Activated CD8-positive, alpha-beta T cell treated with anti-CD3 and anti-CD28 coated beads for 36 hours (primary cell): ENCODE measurements at regions of chr17 and their contacts with region 1.

Region 1: DNA sequence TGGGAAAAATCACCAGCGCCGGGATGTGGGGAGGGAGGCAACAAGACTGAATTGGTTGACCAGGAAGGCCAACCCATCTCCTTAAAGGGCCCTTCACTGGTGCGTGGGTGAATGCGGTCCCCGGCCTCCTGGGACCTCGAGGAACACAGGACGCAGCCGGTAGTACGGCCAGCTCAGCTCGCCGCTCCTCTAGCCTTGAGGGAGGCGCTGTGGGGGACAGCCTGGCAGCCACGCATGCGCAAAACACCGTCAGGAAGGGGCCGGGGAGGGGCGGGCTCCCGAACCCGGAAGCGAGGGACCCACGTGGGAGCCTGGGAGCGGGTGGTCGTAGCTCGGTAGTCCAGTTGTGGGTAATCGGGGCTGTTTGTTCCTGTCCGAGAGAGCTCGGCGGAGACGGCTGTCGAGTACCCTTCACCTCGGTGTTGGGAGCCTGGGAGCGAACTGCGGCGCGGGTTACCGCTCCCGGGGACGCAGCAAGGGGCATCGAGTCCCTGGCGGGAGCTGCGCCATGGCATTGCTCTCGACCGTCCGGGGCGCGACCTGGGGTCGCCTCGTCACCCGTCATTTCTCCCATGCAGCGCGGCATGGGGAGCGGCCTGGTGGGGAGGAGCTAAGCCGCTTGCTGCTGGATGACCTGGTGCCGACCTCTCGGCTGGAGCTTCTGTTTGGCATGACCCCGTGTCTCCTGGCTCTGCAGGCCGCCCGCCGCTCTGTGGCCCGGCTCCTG is at the start of gene MRM1:
- DNase-seq: peak; percentile 92
- ATAC-seq: peak; percentile 88
- H3K4me3 Mint-ChIP-seq: peak within 1 kb of the TSS; percentile 91
- H3K27ac Mint-ChIP-seq: peak within 1 kb of the TSS; percentile 87
- H3K4me1 Mint-ChIP-seq: peaks cover 37% of the 10 kb centered on the region
- H3K27me3 Mint-ChIP-seq: no peaks in the 10 kb centered on the region
- CTCF ChIP-seq: no peak
- total RNA-seq, gene MRM1: 24.5 to 27.4 TPM

Region 2: GRCh38 chr17:36545465-36546417 is 55.7 kb before region 1 on chr17:
- CTCF ChIA-PET with region 1: interaction called, 3 read pairs
- POLR2A ChIA-PET with region 1: interaction called, 10 read pairs
- intact Hi-C with region 1: no loop called
- DNase-seq: peak; percentile 97
- ATAC-seq: peak; percentile 78
- H3K4me3 Mint-ChIP-seq: peak overlapping the region; percentile 98
- H3K27ac Mint-ChIP-seq: peak overlapping the region; percentile 96
- H3K4me1 Mint-ChIP-seq: peaks cover 33% of the 10 kb centered on the region
- H3K27me3 Mint-ChIP-seq: no peaks in the 10 kb centered on the region
- CTCF ChIP-seq: no peak

Region 3: GRCh38 chr17:36614933-36615332 is 13.5 kb after region 1 on chr17:
- CTCF ChIA-PET with region 1: interaction called, 44 read pairs
- POLR2A ChIA-PET with region 1: interaction called, 4 read pairs
- intact Hi-C with region 1: no loop called
- DNase-seq: no peak
- ATAC-seq: no peak
- H3K4me3 Mint-ChIP-seq: no peak overlapping the region
- H3K27ac Mint-ChIP-seq: no peak overlapping the region
- H3K4me1 Mint-ChIP-seq: no peaks in the 10 kb centered on the region
- H3K27me3 Mint-ChIP-seq: no peaks in the 10 kb centered on the region
- CTCF ChIP-seq: no peak

Region 4: GRCh38 chr17:36705874-36706731 is 104.6 kb after region 1 on chr17:
- CTCF ChIA-PET with region 1: interaction called, 14 read pairs
- POLR2A ChIA-PET with region 1: no interaction called
- intact Hi-C with region 1: no loop called
- DNase-seq: peak; percentile 74
- ATAC-seq: peak; percentile 90
- H3K4me3 Mint-ChIP-seq: no peak overlapping the region
- H3K27ac Mint-ChIP-seq: no peak overlapping the region
- H3K4me1 Mint-ChIP-seq: no peaks in the 10 kb centered on the region
- H3K27me3 Mint-ChIP-seq: peaks cover 28% of the 10 kb centered on the region
- CTCF ChIP-seq: peak; percentile 86

Region 5: GRCh38 chr17:37047631-37048104 is 446.2 kb after region 1 on chr17:
- CTCF ChIA-PET with region 1: interaction called, 39 read pairs
- POLR2A ChIA-PET with region 1: interaction called, 3 read pairs
- intact Hi-C with region 1: no loop called
- DNase-seq: peak; percentile 91
- ATAC-seq: peak; percentile 86
- H3K4me3 Mint-ChIP-seq: no peak overlapping the region
- H3K27ac Mint-ChIP-seq: peak overlapping the region; percentile 47
- H3K4me1 Mint-ChIP-seq: peaks cover 11% of the 10 kb centered on the region
- H3K27me3 Mint-ChIP-seq: no peaks in the 10 kb centered on the region
- CTCF ChIP-seq: peak; percentile 84